ENCODE measurements at regions of chr14 and their contacts with region 1.

Region 1: DNA sequence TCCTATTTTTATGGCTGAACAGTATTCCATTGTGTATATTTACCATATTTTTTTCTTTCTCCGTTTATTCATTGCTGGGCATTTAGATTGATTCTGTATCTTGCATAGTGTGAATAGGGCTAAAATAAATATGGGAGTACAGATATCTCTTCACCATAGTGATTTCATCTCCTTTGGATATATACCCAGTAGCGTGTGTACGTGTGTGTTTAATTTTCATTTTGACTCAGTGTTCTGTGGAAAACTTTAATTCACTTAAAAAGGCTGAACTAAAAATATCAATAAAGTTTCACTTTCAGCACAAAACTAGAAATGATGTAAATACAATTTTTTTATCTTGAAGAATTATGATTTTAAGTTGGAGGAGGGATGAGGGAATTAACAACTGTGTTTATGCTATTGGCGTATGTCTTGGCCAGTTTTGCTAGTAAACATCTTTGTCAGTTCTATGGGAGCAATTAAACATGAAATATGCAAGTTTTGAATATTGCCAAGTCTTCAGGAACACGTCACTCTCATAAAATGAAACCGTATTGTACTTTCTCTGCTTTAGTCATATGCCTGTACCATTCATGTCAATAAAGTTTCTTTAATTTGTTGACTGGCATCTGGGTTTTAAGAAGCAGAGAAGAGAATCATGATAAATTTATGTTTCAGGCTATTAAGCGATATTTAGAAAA is 99.8 kb downstream of the PTGER2 start:
- DNase-seq: no peak
- H3K4me3 Mint-ChIP-seq: peak overlapping the region; percentile 62
- H3K27ac Mint-ChIP-seq: peak overlapping the region; percentile 95
- H3K4me1 Mint-ChIP-seq: peaks cover 58% of the 10 kb centered on the region
- H3K27me3 Mint-ChIP-seq: no peaks in the 10 kb centered on the region

Region 2: GRCh38 chr14:51860164-51860824 is 553.6 kb before region 1 on chr14 and contains the start of gene GNG2:
- intact Hi-C with region 1: loop called (anchors 5 kb)
- DNase-seq: peak; percentile 77
- H3K4me3 Mint-ChIP-seq: peak within 1 kb of the TSS; percentile 95
- H3K27ac Mint-ChIP-seq: peak within 1 kb of the TSS; percentile 88
- H3K4me1 Mint-ChIP-seq: peaks cover 63% of the 10 kb centered on the region
- H3K27me3 Mint-ChIP-seq: peaks cover 2% of the 10 kb centered on the region
- total RNA-seq, gene GNG2: 126 and 128 TPM in 2 replicates

Region 3: DNA sequence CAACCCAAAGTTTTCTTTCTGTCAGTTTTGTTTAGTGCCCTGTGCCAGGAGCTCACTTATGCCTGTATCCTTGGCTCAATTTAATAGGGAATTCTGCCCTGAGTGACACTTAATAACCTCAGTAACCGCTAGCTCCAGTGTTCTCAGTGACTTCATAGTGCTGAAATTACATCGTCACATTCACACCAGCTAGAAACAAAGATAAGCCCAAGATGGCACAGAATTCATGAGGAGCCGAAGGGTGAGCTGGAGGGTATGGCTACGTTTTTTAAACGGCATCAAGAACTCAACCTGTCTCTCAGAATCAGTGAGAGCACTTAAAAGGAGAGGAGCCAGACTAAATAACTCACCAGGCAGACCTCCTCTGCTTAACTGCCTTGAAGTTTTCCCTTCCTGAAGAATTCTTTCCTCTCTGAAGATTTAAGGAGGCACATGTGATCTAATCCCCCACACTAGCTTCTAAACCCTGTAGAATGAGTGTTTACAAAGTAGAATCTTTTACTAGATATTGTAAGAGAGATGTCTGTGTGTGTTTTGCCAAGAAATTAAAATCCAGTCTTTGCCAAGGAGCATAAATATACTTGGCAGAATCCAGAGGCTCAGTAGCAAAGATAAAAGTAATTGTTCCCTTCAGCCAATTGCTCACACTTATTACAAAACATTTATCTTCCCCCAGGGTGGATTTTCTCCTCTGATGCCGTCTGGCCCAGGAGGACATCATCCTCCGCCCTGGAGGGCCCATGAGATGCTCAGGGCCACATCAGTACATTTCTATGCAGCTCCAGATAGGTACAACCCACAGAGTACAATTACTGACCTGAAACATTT is 62.4 kb before region 1 on chr14:
- intact Hi-C with region 1: loop called (anchors 1 kb)
- DNase-seq: peak; percentile 8
- H3K4me3 Mint-ChIP-seq: peak overlapping the region; percentile 75
- H3K27ac Mint-ChIP-seq: peak overlapping the region; percentile 96
- H3K4me1 Mint-ChIP-seq: peaks cover 73% of the 10 kb centered on the region
- H3K27me3 Mint-ChIP-seq: no peaks in the 10 kb centered on the region

Region 4: DNA sequence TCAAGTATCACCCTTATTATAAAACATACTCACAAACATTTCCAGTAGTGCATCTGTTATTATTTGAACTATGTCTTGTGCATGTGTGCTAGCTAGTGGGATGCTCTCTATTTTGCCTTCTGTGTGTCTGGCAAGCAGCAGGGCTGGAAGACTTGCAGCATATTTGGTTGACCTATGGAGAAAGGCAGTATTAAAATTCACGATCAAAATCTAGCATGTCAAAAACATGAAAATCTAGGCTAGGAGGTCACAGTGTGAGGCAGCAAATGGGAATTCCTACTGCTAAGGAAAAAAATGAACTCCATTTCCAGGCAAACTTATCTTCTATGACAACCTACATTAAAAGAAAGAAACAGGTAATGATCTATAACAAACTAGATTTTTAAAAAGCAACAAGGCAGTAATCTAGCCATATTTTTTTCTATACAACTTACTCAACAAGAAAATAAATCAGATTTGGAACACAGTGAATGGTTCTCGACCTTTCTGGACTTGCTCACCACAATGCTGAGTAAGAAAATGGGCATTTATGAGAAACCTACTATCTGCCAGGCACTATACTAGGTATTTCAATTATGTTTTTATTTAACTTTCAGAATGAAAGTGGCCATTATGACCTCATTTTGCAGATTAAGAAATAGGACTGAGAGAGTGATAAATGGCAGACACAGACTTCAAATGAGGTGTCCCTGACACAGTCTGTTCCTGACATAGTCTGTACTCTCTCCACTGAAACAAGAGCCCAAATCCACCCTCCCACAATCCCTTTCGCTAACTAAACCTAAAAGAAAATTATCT is 41.6 kb after region 1 on chr14:
- intact Hi-C with region 1: loop called (anchors 1 kb)
- DNase-seq: no peak
- H3K4me3 Mint-ChIP-seq: no peak overlapping the region
- H3K27ac Mint-ChIP-seq: no peak overlapping the region
- H3K4me1 Mint-ChIP-seq: peaks cover 29% of the 10 kb centered on the region
- H3K27me3 Mint-ChIP-seq: no peaks in the 10 kb centered on the region

Region 5: GRCh38 chr14:53190938-53191337 is 777.1 kb after region 1 on chr14:
- intact Hi-C with region 1: loop called (anchors 10 kb)
- DNase-seq: peak; percentile 28
- H3K4me3 Mint-ChIP-seq: peak overlapping the region; percentile 80
- H3K27ac Mint-ChIP-seq: peak overlapping the region; percentile 99
- H3K4me1 Mint-ChIP-seq: peaks cover 54% of the 10 kb centered on the region
- H3K27me3 Mint-ChIP-seq: peaks cover 4% of the 10 kb centered on the region